Dendritic cell treated with granulocyte-macrophage colony-stimulating factor and Interleukin-4, amounts not matched to agents 40 ng/mL and 50 ng/mL, for 4 days (primary cell): ENCODE measurements at regions of chr6 and their contacts with region 1.

Region 1: GRCh38 chr6:72616406-72617015 is 5.4 kb upstream of the KCNQ5 start:
- H3K4me3 Mint-ChIP-seq: no peak overlapping the region
- H3K27ac Mint-ChIP-seq: no peak overlapping the region
- H3K4me1 Mint-ChIP-seq: peaks cover 26% of the 10 kb centered on the region
- H3K27me3 Mint-ChIP-seq: peaks cover 20% of the 10 kb centered on the region

Region 2: DNA sequence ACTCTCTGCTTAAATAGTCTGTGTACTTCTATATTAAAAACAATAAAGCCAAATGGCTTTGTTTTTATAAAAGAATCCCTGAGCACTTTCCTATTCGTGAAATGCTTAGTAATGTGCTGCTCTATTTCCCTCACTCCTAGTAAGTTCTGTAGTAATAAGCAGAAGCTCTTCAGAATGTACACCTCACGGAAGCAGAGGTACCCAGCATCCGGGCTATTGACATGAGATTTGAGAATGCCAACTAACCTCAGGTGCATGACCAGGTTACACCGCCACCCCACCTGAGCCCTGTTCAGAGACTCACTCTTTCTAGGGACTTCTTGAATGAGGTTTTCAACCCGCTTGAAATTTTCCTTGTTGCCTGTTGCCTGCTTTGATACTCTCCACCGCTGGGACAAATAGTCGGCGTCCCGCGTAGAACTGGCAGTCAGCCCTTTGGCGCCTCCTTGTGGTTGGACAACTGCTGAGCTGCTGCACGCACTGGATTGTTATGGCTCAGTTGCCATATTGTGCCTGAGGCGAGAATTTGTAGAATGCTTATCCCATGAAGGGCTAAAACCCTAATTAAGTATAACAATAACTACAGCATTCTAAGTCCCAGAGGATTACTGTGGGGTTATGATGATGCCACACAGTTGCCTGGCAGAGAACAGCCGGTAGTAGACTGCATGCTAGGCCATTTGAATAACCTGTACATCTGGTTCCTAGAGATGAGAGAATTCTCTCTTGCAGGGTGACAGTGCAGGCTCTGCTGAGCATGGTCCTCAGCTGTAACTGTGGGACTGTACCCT is 513.3 kb after region 1 on chr6:
- intact Hi-C with region 1: loop called (anchors 1 kb)
- H3K4me3 Mint-ChIP-seq: no peak overlapping the region
- H3K27ac Mint-ChIP-seq: no peak overlapping the region
- H3K4me1 Mint-ChIP-seq: no peaks in the 10 kb centered on the region
- H3K27me3 Mint-ChIP-seq: peaks cover 1% of the 10 kb centered on the region

Region 3: DNA sequence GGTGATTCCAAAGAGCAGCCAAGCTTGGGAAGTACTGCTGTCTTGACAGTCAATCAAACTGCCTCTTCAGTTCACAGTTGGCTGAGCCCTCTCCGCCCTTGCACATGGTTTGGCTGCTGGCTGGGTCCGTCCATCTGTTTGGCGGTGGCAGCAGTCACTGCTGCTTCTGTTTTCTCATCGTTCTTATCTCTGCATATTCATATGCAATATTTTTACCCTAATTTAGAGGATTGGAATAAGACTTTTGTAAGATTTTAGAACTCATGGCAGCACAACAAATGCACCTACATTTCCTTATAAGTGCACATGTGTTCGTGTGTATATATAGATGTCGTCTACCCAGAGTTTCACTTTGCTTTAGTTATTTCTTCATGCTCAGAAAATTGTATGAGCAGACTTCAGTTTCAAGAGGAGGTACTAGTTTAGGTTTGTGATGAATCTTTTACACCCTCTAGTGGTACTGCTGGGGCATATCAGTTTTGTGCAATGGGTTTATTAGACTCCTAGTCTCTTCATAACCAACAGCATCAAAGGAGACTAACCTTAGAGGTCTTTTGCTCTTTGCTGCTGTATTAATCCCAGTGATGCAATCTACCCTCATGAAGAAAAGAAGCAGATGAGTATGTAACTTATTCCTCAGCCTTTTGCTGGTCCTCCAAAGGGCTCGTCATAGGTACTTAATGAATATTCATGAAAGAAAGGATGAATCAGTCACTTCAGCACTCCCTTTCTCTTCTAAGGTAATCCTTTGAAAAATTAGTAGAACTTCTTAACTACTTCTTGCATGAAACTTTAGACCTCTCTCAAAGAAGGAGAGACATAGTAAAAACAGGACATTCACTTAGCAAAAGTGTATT is 564.5 kb after region 1 on chr6:
- intact Hi-C with region 1: loop called (anchors 2 kb)
- H3K4me3 Mint-ChIP-seq: no peak overlapping the region
- H3K27ac Mint-ChIP-seq: no peak overlapping the region
- H3K4me1 Mint-ChIP-seq: no peaks in the 10 kb centered on the region
- H3K27me3 Mint-ChIP-seq: no peaks in the 10 kb centered on the region